ENCODE measurements at regions of chr7 and their contacts with region 1.

Region 1: DNA sequence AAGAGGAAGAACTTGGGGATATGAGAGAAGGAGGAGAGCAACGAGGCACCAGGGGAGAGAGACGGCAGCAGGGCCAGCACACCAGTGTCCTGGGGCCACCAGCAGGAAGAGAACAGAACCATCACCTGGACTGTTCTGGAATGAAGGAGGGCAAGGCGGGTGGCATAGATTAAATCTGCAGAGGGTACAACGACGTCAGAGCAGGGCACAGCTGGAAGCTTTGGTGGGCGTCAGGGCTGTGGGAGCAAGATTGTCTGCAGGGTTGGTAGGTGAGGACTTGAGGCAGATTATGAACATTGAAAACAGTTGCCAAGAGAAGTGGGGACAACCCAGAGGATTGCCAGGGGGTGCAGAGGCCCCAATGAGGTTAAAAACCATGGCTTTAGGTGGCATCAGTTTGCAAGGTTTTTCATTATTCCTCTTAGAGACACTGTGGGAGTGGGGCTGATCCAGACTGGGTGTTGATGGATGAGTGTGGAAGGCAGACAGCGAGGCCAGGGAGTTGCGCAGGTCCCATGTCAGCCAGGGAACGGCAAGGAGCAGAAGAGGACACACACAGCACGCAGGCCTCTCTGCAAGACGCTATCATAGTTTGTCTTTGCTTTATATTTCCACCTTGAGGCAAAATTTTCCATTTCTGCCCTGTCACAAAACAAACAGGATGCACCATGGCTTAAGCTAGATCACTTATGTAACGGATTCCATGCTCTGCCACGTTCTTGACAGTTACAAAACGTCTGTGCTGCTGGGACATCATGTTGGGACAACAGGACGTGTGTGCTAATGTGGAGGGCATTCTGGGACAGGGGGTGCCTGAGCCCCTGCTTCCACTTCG is 52.5 kb upstream of the LEP start:
- DNase-seq: no peak
- H3K4me3 ChIP-seq: no peak overlapping the region
- H3K4me3 Mint-ChIP-seq: no peak overlapping the region
- H3K27ac ChIP-seq: no peak overlapping the region
- H3K27ac Mint-ChIP-seq: no peak overlapping the region
- H3K4me1 ChIP-seq: peaks cover 13 to 20% of the 10 kb centered on the region in 2 donors
- H3K4me1 Mint-ChIP-seq: peaks cover 29% of the 10 kb centered on the region
- H3K27me3 ChIP-seq: peaks cover 0 to 6% of the 10 kb centered on the region in 2 donors
- H3K27me3 Mint-ChIP-seq: peaks cover 11 to 22% (median 16%) of the 10 kb centered on the region in 3 donors
- CTCF ChIP-seq: no peak

Region 2: GRCh38 chr7:128151635-128152034 is 37.0 kb before region 1 on chr7:
- intact Hi-C with region 1: loop called in 1 of 2 experiments (anchors 2 kb)
- DNase-seq: peak; percentile 47 to 63 (median 56)
- H3K4me3 ChIP-seq: peak overlapping the region in 1 of 3 experiments; percentile 39
- H3K4me3 Mint-ChIP-seq: peak overlapping the region in 1 of 2 donors; percentile 18
- H3K27ac ChIP-seq: peak overlapping the region; percentile 55 to 73
- H3K27ac Mint-ChIP-seq: peak overlapping the region; percentile 71 to 91 (median 88)
- H3K4me1 ChIP-seq: peaks cover 71 to 72% of the 10 kb centered on the region in 2 donors
- H3K4me1 Mint-ChIP-seq: peaks cover 68% of the 10 kb centered on the region
- H3K27me3 ChIP-seq: no peaks in the 10 kb centered on the region
- H3K27me3 Mint-ChIP-seq: peaks cover under 1 to 13% (median 7%) of the 10 kb centered on the region in 3 donors
- CTCF ChIP-seq: no peak

Region 3: GRCh38 chr7:128299109-128299607 is 110.5 kb after region 1 on chr7:
- intact Hi-C with region 1: no loop called
- DNase-seq: no peak
- H3K4me3 ChIP-seq: no peak overlapping the region
- H3K4me3 Mint-ChIP-seq: no peak overlapping the region
- H3K27ac ChIP-seq: no peak overlapping the region
- H3K27ac Mint-ChIP-seq: peak overlapping the region in 1 of 7 donors; percentile 24
- H3K4me1 ChIP-seq: peaks cover 0 to 6% of the 10 kb centered on the region in 2 donors
- H3K4me1 Mint-ChIP-seq: peaks cover 11% of the 10 kb centered on the region
- H3K27me3 ChIP-seq: no peaks in the 10 kb centered on the region
- H3K27me3 Mint-ChIP-seq: peaks cover 0 to 3% (median 0%) of the 10 kb centered on the region in 3 donors
- CTCF ChIP-seq: no peak

Region 4: GRCh38 chr7:128398016-128398840 is 209.6 kb after region 1 on chr7:
- intact Hi-C with region 1: no loop called
- DNase-seq: peak in 2 of 3 donors; percentile 42 to 54
- H3K4me3 ChIP-seq: no peak overlapping the region
- H3K4me3 Mint-ChIP-seq: no peak overlapping the region
- H3K27ac ChIP-seq: no peak overlapping the region
- H3K27ac Mint-ChIP-seq: peak overlapping the region in 1 of 7 donors; percentile 32
- H3K4me1 ChIP-seq: no peaks in the 10 kb centered on the region
- H3K4me1 Mint-ChIP-seq: no peaks in the 10 kb centered on the region
- H3K27me3 ChIP-seq: no peaks in the 10 kb centered on the region
- H3K27me3 Mint-ChIP-seq: no peaks in the 10 kb centered on the region
- CTCF ChIP-seq: peak; percentile 97